ENCODE measurements at regions of chr18 and their contacts with region 1.

Region 1: GRCh38 chr18:9136315-9137155 is at the start of gene ANKRD12:
- DNase-seq: peak; percentile 96
- H3K4me3 ChIP-seq: peak within 1 kb of the TSS; percentile 76 to 80
- H3K27ac ChIP-seq: peak within 1 kb of the TSS; percentile 99 to 100
- H3K4me1 ChIP-seq: peaks cover 9% of the 10 kb centered on the region
- H3K27me3 ChIP-seq: no peaks in the 10 kb centered on the region
- CTCF ChIP-seq: peak in 1 of 4 experiments; percentile 22
- POLR2A ChIP-seq: peak; percentile 75
- total RNA-seq, gene ANKRD12: 38.7 to 50.1 TPM

Region 2: GRCh38 chr18:8704361-8705279 is 431.9 kb before region 1 on chr18:
- intact Hi-C with region 1: loop called (anchors 10 kb)
- DNase-seq: peak; percentile 88
- H3K4me3 ChIP-seq: peak overlapping the region; percentile 62 to 63
- H3K27ac ChIP-seq: peak overlapping the region; percentile 88 to 90
- H3K4me1 ChIP-seq: peaks cover 8% of the 10 kb centered on the region
- H3K27me3 ChIP-seq: no peaks in the 10 kb centered on the region
- CTCF ChIP-seq: peak in 1 of 4 experiments; percentile 28
- POLR2A ChIP-seq: peak; percentile 68

Region 3: DNA sequence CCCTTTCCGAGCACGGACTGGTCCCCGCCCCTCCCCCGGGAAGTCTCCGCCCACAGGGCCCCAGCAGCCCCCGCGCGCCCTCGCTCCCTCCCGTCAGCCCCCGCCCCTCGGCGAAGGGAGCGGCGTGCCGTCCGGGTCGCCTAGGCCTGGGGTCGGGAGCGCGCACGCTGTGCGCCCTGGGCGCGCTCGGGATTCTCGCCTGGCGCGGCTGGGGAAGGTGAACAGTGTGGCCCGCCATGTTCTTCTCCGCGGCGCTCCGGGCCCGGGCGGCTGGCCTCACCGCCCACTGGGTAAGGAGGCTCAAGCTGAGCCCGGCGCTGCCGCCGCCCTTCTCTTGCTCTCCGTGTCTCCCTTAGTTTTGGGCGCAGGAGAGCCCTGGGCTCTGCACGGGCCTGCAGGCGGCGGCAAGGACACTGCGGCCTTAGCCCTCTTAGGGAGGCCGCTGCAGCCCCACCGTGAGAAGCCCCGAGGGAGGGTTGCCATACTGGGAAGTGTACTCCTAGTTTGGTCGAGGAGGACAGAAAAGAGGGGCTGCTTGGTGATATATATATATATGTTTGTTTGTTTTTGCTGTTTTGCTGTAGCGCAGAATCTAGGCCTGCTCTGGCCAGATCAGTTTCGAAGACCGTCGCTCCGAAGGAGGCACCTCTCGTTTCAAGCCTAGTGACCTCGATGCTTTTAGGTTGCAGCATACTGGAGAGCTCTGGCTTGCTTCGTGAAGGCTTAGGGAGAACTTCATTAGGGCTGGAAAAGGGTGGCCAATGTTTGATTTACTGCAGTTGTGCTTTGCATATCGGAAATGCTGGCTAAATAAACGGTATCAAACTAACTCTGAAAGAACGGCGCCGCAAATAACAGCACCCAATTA is 33.8 kb before region 1 on chr18 and contains the start of gene NDUFV2:
- intact Hi-C with region 1: loop called (anchors 1 kb)
- DNase-seq: peak; percentile 95
- H3K4me3 ChIP-seq: peak within 1 kb of the TSS; percentile 54 to 65
- H3K27ac ChIP-seq: peak within 1 kb of the TSS; percentile 92 to 95
- H3K4me1 ChIP-seq: no peaks in the 10 kb centered on the region
- H3K27me3 ChIP-seq: no peaks in the 10 kb centered on the region
- CTCF ChIP-seq: peak in 2 of 4 experiments; percentile 4 to 26
- POLR2A ChIP-seq: peak; percentile 96
- total RNA-seq, gene NDUFV2: 114 to 161 TPM

Region 4: DNA sequence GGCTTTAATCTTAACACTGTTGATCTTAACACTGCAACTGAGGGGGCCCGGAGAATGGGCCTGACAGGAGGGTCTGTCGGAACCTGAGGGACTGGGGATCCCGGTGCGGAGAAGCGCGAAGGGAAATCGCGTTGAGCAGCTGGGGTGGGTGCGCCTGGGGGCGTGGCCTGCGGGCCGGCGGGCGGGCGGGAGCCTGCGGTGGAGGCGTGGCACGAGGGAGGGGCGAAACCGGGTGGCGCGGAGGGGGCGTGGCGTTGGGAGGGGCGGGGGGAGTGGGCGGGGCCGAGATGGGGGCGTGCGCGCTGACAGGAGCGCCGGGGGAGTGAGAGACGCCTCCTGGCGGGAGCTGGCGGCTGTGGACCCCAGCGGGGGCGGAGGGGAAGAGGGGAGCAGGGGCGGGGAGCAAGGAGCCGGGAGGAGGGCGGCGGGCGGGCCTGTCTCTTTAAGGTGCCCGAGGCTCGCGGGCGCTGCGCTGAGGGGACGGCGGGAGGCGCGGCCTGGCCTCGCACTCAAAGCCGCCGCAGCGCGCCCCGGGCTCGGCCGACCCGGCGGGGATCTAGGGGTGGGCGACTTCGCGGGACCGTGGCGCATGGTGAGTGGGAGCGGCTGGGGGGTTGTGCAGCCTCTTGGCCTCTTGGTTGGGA is 197.9 kb after region 1 on chr18 and contains the start of gene TWSG1:
- intact Hi-C with region 1: loop called (anchors 10 kb)
- DNase-seq: peak; percentile 92
- H3K4me3 ChIP-seq: peak within 1 kb of the TSS; percentile 84 to 88
- H3K27ac ChIP-seq: peak within 1 kb of the TSS; percentile 89 to 94
- H3K4me1 ChIP-seq: peaks cover 6% of the 10 kb centered on the region
- H3K27me3 ChIP-seq: no peaks in the 10 kb centered on the region
- CTCF ChIP-seq: peak; percentile 29 to 46 (median 32)
- POLR2A ChIP-seq: peak; percentile 75
- total RNA-seq, gene TWSG1: 32.2 to 46.0 TPM

Region 5: DNA sequence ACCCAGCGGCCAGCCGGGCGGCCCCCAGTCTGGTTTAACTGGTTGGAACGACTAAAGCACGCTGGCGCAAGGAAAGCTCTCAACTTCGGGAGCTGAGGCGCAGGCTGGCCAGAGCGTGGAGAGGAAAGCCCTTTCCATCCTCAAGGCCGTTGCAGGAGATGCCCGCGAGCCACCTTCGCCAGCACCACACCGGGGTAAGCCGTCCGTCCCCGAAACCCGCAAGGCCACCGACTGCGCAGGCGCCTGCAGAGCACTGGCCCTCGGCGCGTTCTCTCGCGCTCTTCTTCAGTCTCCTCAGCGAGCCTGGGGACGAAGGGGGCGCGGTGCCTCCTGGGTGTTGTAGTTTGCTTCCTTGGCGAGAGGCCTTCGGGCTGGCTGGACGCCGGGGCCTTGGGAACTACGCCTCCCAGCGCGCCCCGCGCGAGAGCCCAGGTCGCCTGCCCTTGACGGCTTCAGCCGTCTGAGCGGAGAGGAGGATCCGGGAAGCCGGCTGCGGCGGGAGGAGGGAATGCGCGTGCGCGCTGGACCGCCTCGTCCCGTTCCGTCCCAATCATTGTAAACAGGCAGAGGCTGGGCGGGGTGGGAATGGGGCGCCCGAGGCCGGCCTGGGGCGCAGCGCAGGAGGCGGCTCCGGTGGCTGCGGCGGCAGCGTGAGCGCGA is 338.6 kb after region 1 on chr18 and contains the start of gene RALBP1:
- intact Hi-C with region 1: loop called (anchors 5 kb)
- DNase-seq: peak; percentile 99
- H3K4me3 ChIP-seq: peak within 1 kb of the TSS; percentile 60 to 95
- H3K27ac ChIP-seq: peak within 1 kb of the TSS; percentile 95
- H3K4me1 ChIP-seq: no peaks in the 10 kb centered on the region
- H3K27me3 ChIP-seq: no peaks in the 10 kb centered on the region
- CTCF ChIP-seq: peak in 3 of 4 experiments; percentile 11 to 30 (median 30)
- POLR2A ChIP-seq: peak; percentile 92
- total RNA-seq, gene RALBP1: 58.2 to 64.8 TPM

Measured in prostate gland (tissue), 2 donors.